BJ (cell line): ENCODE measurements at regions of chr12 and their contacts with region 1.

Region 1: GRCh38 chr12:62793256-62794217 is 141.4 kb downstream of the PPM1H start:
- DNase-seq: peak; percentile 59
- H3K4me3 ChIP-seq: no peak overlapping the region
- H3K27me3 ChIP-seq: no peaks in the 10 kb centered on the region
- CTCF ChIP-seq: peak; percentile 91

Region 2: DNA sequence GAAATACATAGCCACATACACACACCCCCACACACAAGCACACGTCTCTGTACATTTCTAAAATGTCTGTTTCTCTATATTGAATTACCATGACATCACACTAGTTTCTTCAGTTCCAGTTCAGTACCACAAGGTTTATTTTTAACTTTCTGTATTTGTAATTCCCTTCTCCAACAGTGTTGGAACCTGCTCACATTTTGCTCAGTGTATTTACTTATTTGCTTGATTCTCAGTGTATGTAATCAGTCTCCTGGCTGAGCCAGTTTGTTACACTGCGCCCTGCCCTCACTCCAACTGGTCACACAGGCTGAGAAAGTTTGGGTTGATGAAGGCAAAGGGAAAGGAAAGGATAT is 259.8 kb before region 1 on chr12:
- CTCF ChIA-PET with region 1: no interaction called
- POLR2A ChIA-PET with region 1: no interaction called
- DNase-seq: no peak
- H3K4me3 ChIP-seq: no peak overlapping the region
- H3K27me3 ChIP-seq: no peaks in the 10 kb centered on the region
- CTCF ChIP-seq: no peak

Region 3: GRCh38 chr12:62575036-62575435 is 218.5 kb before region 1 on chr12:
- CTCF ChIA-PET with region 1: interaction called, 179 read pairs
- POLR2A ChIA-PET with region 1: no interaction called
- DNase-seq: no peak
- H3K4me3 ChIP-seq: no peak overlapping the region
- H3K27me3 ChIP-seq: no peaks in the 10 kb centered on the region
- CTCF ChIP-seq: no peak

Region 4: DNA sequence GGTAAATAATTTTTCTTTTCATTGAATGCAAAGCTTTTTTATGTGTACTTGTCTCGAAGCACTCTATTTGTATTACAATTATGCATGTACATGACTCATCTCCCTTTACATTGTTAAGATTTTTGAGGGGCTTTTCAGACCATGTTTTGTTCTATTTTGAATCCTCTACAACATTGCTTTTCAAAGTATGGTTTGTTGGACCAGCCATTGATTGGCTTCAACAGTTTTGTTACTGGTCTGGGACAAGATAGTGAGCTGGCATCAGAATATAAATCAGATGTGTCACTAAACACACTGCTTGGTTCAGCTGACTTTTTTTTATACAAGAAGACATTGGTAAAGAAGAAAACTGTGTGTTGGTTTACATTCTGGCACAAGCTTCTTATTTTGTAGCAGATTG is 204.6 kb before region 1 on chr12:
- CTCF ChIA-PET with region 1: interaction called, 179 read pairs
- POLR2A ChIA-PET with region 1: no interaction called
- DNase-seq: no peak
- H3K4me3 ChIP-seq: no peak overlapping the region
- H3K27me3 ChIP-seq: no peaks in the 10 kb centered on the region
- CTCF ChIP-seq: no peak

Region 5: GRCh38 chr12:62603061-62603810 is 190.3 kb before region 1 on chr12:
- CTCF ChIA-PET with region 1: interaction called, 33 read pairs
- POLR2A ChIA-PET with region 1: interaction called, 3 read pairs
- DNase-seq: peak; percentile 47
- H3K4me3 ChIP-seq: peak overlapping the region; percentile 69
- H3K27me3 ChIP-seq: no peaks in the 10 kb centered on the region
- CTCF ChIP-seq: peak; percentile 58

Region 6: DNA sequence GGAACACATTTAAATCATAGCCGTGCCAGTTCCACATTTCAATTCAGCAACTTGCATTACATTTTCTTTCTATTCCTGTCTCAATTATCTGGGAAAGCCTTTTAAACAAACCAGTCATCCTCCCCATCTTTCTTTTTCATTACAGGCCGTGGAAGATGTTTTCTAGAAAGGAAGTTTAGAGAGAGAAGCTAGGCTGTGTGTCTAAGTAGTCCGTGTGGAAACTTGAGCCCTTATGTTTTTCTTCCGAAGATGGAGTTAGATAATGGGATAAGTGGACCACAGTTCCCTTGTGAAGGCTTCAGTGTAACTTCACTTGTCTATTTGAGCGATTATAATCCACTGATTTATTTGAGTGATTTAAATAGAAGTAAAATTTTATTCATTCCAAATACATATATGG is 153.8 kb after region 1 on chr12:
- CTCF ChIA-PET with region 1: no interaction called
- POLR2A ChIA-PET with region 1: no interaction called
- DNase-seq: no peak
- H3K4me3 ChIP-seq: no peak overlapping the region
- H3K27me3 ChIP-seq: peaks cover 8% of the 10 kb centered on the region
- CTCF ChIP-seq: no peak